Astrocyte of the cerebellum (primary cell): ENCODE measurements at regions of chr9 and their contacts with region 1.

Region 1: GRCh38 chr9:1698991-1699390 is 316.2 kb upstream of the SMARCA2 start:
- DNase-seq: no peak
- H3K4me3 ChIP-seq: no peak overlapping the region
- CTCF ChIP-seq: no peak

Region 2: GRCh38 chr9:1604942-1605560 is 93.9 kb before region 1 on chr9:
- in situ Hi-C with region 1: loop called (anchors 5 kb)
- DNase-seq: no peak
- H3K4me3 ChIP-seq: no peak overlapping the region
- CTCF ChIP-seq: peak; percentile 40